Activated CD8-positive, alpha-beta memory T cell treated with anti-CD3 and anti-CD28 coated beads, Interleukin-2, amount 10 ng/mL, durations not matched to agents 7 days and 5 days (primary cell): ENCODE measurements at regions of chr11 and their contacts with region 1.

Region 1: GRCh38 chr11:117907251-117907981 is 21.8 kb downstream of the TMPRSS13 start:
- DNase-seq: peak; percentile 84
- ATAC-seq: peak; percentile 97
- H3K4me3 Mint-ChIP-seq: peak overlapping the region; percentile 29
- H3K27ac Mint-ChIP-seq: peak overlapping the region; percentile 65
- H3K4me1 Mint-ChIP-seq: peaks cover 19% of the 10 kb centered on the region
- H3K27me3 Mint-ChIP-seq: no peaks in the 10 kb centered on the region

Region 2: GRCh38 chr11:117861151-117862018 is 46.0 kb before region 1 on chr11:
- CTCF ChIA-PET with region 1: no interaction called
- DNase-seq: no peak
- ATAC-seq: no peak
- H3K4me3 Mint-ChIP-seq: no peak overlapping the region
- H3K27ac Mint-ChIP-seq: peak overlapping the region; percentile 28
- H3K4me1 Mint-ChIP-seq: peaks cover 13% of the 10 kb centered on the region
- H3K27me3 Mint-ChIP-seq: peaks cover 23% of the 10 kb centered on the region

Region 3: DNA sequence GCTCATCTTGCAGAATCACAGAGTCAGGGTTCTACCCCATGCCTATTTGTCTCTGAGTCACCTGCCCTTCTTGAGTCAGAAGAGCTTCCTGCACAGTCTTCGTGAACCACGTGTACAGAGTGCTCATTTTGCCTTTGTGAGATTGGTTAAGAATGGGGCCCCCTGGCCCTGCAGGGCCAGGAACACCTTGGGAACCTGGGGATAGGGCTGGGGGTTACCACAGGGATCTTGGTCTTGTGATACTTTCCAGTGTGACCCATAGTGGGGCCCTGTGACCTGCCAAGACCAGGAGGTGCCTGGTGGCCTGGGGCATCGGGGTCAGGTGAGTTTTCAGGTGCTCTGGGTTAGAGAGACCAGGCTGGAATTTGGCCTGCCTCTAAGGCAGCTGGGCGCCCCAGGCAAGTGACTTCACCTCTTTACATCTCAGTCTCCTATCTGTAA is 12.4 kb after region 1 on chr11:
- CTCF ChIA-PET with region 1: interaction called, 11 read pairs
- DNase-seq: no peak
- ATAC-seq: peak; percentile 83
- H3K4me3 Mint-ChIP-seq: no peak overlapping the region
- H3K27ac Mint-ChIP-seq: no peak overlapping the region
- H3K4me1 Mint-ChIP-seq: peaks cover 17% of the 10 kb centered on the region
- H3K27me3 Mint-ChIP-seq: no peaks in the 10 kb centered on the region

Region 4: GRCh38 chr11:117932067-117932370 is 24.6 kb after region 1 on chr11:
- CTCF ChIA-PET with region 1: no interaction called
- DNase-seq: peak; percentile 71
- ATAC-seq: no peak
- H3K4me3 Mint-ChIP-seq: no peak overlapping the region
- H3K27ac Mint-ChIP-seq: peak overlapping the region; percentile 95
- H3K4me1 Mint-ChIP-seq: peaks cover 81% of the 10 kb centered on the region
- H3K27me3 Mint-ChIP-seq: peaks cover 7% of the 10 kb centered on the region